Ovary (tissue), 10 donors: ENCODE measurements at regions of chr11 and their contacts with region 1.

Region 1: DNA sequence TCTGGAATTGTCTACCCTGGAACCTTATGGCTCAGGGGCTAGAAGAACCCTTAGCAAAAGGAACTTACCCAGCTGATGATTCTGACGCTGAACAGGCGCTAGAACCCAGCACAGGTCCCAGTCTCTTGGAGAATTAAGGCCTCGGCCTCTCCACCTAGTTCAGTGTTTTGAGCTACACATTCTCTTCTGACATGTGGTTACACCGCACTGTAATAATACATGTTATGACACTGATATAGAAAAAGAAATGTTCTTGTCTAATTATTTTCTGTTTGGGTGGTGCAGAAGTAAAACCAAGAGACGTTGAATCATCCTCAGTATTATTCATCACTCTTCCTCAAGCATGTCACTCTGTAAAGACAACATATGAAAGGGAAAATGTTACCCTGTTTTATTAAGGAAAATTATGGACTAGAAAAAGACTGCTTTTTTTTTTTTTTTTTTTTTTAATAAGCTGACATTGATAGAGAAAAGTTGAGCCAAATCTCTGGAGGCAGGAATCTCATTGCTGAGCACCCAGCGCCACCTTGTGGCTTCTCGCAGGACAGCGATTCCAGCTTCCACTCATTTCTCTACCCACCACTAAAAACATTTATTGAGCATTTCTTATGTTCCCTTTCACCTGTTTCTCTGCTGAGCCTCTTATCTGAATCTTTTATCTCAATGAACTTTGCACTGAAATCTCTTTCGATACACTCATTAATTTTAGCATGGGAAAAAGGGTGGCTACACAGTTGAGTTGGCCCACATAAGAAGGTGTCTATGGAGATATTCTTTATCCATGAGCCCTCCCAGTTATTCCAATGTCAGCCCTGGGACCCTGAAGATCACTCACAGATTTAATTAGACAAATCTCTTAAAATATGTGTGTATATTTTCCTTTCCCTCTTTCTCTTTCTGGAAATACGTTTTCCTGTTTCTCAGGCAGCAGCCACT is 12.6 kb upstream of the APLNR start:
- DNase-seq: peak; percentile 29 to 76 (median 64)
- H3K4me3 ChIP-seq: no peak overlapping the region
- H3K27ac ChIP-seq: no peak overlapping the region
- H3K4me1 ChIP-seq: peaks cover 1% of the 10 kb centered on the region
- H3K27me3 ChIP-seq: no peaks in the 10 kb centered on the region
- CTCF ChIP-seq: peak; percentile 30 to 63 (median 54)
- EP300 ChIP-seq: no peak
- POLR2A ChIP-seq: no peak

Region 2: DNA sequence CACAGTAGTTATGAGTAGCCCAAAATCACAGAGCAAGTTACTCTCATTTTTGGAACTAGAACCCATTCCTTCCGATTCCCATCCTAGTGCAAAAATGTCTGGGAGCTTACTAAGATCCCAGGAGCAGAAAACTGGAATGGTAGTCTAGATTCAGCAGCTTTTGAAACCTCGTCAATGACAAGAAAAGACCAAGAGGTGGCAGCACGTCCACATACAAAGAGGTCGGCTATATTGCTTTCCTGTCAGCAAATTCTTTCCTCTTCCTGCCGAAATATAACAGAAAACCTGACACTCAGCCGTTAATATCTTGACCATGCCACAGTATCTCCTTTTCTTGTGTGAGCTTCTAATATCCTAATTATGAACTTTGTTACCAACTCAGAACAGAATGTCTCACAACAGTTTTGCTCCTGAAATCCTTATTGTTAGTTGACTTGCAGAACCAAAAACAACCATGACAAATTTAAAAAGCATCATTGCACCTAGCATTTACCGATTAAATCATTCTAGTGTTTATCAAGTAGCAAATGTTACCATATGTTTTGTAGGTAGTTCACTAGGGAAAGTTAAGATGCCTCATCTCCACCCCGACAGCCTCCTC is 408.3 kb before region 1 on chr11:
- intact Hi-C with region 1: loop called (anchors 5 to 10 kb)
- DNase-seq: peak in 4 of 5 donors; percentile 20 to 37 (median 28)
- H3K4me3 ChIP-seq: no peak overlapping the region
- H3K27ac ChIP-seq: no peak overlapping the region
- H3K4me1 ChIP-seq: no peaks in the 10 kb centered on the region
- H3K27me3 ChIP-seq: no peaks in the 10 kb centered on the region
- CTCF ChIP-seq: peak in 1 of 3 donors; percentile 42
- EP300 ChIP-seq: no peak
- POLR2A ChIP-seq: no peak

Region 3: DNA sequence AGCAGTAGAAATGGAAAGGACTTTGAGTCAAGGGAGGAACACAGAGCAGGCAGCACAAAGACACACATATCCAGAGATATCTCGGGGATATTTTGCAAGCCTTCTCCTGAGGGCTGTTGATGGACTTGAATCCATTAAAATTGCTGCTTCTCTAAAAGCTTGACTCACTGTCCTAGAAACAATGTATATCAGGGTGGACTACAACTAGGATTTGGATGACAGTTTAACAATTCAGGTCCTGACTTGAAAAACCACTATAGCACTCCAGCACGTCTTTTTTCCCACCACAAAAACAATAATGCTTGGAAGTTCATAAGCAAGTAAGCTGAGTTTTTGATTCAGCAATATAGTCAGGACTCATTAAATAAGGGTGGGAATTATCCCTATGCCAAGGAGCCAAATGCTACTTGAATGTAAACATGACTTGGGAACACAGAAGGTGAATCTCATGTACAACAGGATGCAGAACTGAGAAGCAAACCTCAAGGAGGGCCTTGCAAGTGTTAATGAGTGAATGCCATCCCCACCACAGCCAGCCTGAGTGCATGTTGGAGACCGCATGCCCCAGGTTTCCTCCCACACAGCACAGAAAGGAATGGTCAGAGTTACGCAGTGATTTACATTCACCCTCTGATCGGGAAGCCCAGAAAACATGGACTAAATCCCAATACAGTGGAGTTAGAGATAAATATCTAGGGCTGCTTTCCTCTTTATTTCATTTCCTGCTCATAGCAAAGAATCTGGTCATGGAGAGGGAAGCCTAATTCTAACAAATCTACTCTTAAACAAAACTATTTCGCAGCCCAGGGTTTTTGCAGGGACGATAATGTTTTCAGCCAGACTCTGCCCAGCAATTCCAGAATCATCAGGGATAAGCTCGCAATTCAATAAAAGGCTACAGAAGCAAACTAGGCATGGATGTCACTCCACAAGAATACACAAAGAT is 402.7 kb before region 1 on chr11:
- intact Hi-C with region 1: loop called (anchors 5 to 10 kb)
- DNase-seq: no peak
- H3K4me3 ChIP-seq: no peak overlapping the region
- H3K27ac ChIP-seq: no peak overlapping the region
- H3K4me1 ChIP-seq: no peaks in the 10 kb centered on the region
- H3K27me3 ChIP-seq: no peaks in the 10 kb centered on the region
- CTCF ChIP-seq: no peak
- EP300 ChIP-seq: no peak
- POLR2A ChIP-seq: no peak

Region 4: DNA sequence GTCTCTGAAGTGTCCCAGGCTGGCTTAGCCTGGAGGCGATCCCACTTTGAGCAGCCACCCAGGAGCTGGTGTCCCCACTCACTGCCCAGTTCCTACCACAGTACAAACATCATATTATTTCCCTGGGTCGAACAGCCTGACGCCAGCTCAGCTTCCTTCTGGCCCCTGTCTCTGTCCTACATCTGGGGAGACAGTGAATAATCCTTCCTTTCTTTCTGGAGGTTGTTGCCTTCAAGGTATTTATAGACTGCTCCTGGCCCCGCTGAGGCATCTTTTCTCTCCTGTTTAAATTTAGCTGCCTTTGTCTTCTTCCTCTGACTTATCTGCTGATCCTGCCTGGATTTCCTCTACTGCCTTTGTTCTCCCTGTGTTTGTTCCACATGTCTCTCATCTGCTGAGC is 124.7 kb before region 1 on chr11:
- intact Hi-C with region 1: loop called in 1 of 4 experiments (anchors 10 kb)
- DNase-seq: no peak
- H3K4me3 ChIP-seq: no peak overlapping the region
- H3K27ac ChIP-seq: no peak overlapping the region
- H3K4me1 ChIP-seq: no peaks in the 10 kb centered on the region
- H3K27me3 ChIP-seq: no peaks in the 10 kb centered on the region
- CTCF ChIP-seq: no peak
- EP300 ChIP-seq: no peak
- POLR2A ChIP-seq: no peak

Region 5: DNA sequence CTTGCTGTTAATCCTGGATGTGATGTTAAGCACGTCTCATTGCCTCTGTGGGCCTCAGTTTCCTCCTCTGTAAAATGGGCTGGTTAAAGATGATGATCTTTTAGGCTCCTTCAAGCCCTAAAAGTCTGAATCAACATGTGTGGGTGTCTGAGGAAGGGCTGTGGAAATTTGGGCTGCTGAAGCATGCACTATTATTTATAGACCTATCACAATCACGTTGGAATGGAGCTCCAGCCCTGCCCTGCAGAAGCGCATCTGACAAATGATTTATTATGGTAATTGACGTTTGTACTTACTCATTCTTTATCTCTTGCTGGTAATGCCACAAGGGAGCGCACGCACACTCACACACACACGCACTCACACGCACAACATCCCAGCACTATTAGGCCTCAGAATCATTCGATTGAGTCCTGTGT is 108.9 kb after region 1 on chr11:
- intact Hi-C with region 1: no loop called
- DNase-seq: no peak
- H3K4me3 ChIP-seq: no peak overlapping the region
- H3K27ac ChIP-seq: no peak overlapping the region
- H3K4me1 ChIP-seq: no peaks in the 10 kb centered on the region
- H3K27me3 ChIP-seq: no peaks in the 10 kb centered on the region
- CTCF ChIP-seq: no peak
- EP300 ChIP-seq: no peak
- POLR2A ChIP-seq: no peak